AG04450 (cell line): ENCODE measurements at regions of chr11 and their contacts with region 1.

Region 1: DNA sequence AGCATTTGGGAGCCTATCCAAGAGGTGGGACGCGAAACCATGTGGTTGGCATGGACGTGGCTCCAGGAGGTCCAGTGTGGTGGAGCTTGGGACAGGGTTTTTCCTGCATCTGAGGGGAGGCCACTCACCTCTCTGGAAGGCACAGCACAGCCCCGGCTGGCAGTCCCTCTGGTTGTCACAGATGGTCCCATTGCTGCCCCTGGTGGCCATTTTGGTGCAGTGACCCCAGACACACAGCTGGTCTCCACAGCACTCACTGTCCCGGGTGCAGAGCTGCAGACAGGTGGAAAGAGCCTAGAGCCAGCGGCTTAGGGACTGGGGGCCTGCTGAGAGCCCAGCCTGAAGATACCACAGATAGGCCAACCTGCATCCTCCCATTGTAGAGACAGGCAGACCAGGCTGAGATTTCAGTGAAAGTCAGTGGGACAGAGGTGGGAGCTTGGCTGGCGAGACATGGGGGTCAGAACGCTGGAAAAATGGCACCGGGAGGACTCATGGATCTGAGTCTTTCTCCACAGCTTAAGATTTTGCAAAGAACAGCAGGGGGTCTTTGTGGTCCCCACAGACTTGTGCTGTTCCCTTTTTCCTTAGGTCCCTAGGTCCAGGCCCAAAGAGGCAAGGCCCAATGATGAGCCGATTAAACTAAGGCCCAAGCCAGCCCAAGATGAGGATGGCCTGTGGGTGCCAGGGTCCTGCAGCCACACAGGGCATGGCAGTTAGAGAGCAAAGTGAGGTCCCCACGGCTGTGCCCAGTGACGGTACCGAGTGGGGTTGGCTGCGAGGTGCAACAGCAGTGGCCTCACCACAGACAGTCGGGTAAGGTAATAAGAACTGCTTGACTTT is 41.4 kb downstream of the DKK3 start:
- DNase-seq: no peak
- H3K4me3 ChIP-seq: no peak overlapping the region
- H3K27ac ChIP-seq: no peak overlapping the region
- H3K27me3 ChIP-seq: no peaks in the 10 kb centered on the region
- CTCF ChIP-seq: peak; percentile 67

Region 2: DNA sequence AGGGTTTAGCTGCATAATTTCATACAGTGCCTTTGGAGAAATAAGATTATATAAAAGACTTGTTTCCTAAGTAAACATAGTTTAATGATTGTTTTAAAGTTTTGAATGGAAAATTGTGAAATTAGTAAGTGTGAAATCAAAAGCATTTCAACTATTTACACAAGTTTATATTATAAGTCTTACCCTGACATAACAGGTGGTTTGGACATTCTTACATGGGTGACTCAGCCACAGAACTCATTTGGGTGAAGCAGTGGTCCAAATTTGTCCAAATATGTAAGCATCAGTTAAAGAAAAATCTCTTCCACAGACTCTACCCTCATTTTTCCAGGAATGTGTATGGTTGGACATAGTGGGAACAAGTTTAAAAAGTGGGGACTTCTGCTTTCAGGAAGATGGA is 57.3 kb before region 1 on chr11:
- CTCF ChIA-PET with region 1: no interaction called
- POLR2A ChIA-PET with region 1: no interaction called
- DNase-seq: peak; percentile 65
- H3K4me3 ChIP-seq: no peak overlapping the region
- H3K27ac ChIP-seq: peak overlapping the region; percentile 78
- H3K27me3 ChIP-seq: no peaks in the 10 kb centered on the region
- CTCF ChIP-seq: no peak

Region 3: DNA sequence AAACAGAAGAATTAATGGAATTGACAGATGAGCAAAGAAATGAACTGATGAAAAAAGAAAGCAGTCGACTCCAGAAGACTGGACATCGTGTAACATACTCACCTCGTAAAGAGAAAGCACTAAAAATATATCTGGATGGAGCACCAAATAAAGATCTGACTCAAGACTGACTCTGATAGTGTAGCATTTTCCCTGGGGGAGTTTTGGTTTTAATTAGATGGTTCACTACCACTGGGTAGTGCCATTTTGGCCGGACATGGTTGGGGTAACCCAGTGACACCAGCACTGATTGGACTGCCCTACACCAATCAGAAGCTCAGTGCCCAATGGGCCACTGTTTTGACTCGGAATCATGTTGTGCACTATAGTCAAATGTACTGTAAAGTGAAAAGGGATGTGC is 11.0 kb before region 1 on chr11:
- CTCF ChIA-PET with region 1: interaction called, 13 read pairs
- POLR2A ChIA-PET with region 1: no interaction called
- DNase-seq: no peak
- H3K4me3 ChIP-seq: no peak overlapping the region
- H3K27ac ChIP-seq: no peak overlapping the region
- H3K27me3 ChIP-seq: no peaks in the 10 kb centered on the region
- CTCF ChIP-seq: no peak

Region 4: DNA sequence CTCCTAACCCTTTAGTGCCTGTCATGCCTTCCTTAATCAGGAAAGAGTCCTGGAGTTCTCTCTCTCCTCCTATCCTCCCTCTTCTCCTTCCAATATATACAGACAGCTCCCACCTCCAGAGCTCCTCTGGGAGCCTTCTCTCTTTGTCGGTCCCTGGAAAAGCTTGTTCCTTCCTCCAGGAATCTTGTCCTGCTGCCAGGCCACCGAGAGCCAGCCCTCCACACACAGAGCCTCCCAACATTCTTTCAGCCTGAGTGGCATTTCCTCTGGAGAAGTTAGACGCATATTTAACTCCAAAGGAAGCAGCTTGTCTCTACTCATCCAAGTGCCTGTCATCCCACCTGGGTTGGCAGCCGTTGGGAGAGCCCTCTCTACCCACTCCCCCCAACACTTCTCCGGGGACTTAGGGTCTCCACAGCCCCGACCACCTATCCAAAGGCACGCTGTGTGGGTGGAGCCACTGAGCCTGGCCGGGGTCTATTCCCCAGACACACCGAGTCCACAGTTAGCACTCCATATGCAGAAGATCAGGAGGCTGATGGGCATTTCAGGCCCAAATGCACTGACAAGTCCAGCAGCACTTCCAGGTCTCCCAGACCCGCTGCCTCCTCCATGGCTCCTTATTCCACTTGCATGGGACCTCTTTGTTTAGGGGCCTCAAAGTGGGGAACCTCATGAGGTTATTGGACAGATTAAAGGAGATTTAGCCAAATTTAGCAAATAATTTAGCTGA is 10.3 kb after region 1 on chr11:
- CTCF ChIA-PET with region 1: interaction called, 18 read pairs
- POLR2A ChIA-PET with region 1: interaction called, 3 read pairs
- DNase-seq: peak; percentile 83
- H3K4me3 ChIP-seq: peak overlapping the region; percentile 13; the same call in 1 of the 2 replicates
- H3K27ac ChIP-seq: peak overlapping the region; percentile 88
- H3K27me3 ChIP-seq: no peaks in the 10 kb centered on the region
- CTCF ChIP-seq: no peak

Region 5: DNA sequence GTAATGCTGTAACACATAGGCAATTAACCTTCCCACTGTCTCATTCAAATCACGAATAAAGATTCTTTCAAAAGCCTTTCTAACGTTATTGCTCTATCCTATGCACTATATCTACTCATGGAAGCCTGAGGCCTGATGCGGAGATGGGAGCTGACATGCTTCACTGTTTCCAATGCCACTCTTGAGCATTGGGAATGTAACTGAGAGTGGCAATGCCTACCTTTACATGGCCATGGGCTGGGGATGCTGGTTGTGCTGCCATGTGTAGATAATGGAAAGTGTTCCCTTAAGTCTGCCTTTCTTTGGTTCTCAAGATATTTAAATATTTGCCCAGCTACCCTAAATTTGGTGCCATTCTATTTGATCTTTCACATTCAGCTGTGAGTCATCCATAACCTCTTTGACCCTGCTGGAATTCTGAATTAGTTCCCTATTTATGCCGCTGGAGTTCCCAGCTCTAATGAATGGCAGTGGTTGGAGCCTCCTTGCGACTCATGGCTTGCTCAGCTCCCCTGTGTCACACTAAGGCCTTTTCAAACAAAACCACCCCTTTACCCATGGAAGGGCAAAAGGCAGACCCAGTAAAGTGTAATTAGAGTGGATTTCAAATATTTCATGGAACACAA is 62.8 kb after region 1 on chr11:
- CTCF ChIA-PET with region 1: no interaction called
- POLR2A ChIA-PET with region 1: no interaction called
- DNase-seq: no peak
- H3K4me3 ChIP-seq: no peak overlapping the region
- H3K27ac ChIP-seq: no peak overlapping the region
- H3K27me3 ChIP-seq: no peaks in the 10 kb centered on the region
- CTCF ChIP-seq: no peak

Region 6: DNA sequence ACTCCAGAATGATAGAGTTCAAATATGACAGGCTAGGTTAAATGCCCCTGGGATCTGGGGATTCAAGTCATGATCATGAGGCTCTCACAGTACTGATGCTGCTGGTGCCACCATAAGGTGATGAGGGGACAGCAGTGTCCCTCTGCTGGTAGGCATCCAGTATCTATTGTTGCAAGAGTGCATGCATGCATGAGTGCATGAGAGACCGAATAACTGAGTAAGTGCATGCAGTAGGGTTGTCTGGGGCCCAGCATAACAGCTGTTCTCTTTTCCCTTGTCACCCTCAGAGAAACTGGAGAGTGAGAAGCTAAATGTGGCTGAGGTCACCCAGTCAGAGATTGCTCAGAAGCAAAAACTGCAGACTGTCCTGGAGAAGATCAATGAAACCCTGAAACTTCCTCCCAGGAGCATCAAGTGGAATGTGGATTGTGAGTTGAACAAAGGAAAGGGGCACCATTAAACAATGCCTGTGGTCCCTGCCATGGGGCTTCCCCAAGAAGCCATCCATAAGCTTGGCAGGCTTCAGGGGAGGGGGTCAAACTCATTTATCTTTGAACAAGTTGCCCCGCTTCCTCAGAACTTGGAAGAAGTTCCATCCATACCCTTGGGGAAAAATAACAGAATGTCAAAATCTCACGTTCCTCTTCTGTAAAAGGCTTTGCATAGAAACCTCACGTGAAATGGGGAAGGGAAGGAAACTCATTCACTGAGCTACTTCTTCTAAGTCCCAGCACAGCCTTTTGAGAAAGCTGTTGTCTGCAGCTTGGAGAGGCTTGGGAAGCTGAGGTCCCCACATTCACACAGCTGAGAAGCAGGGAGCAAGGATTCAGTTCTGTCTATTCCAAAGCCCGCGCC is 529.4 kb after region 1 on chr11:
- CTCF ChIA-PET with region 1: no interaction called
- POLR2A ChIA-PET with region 1: no interaction called
- DNase-seq: no peak
- H3K4me3 ChIP-seq: no peak overlapping the region
- H3K27ac ChIP-seq: no peak overlapping the region
- H3K27me3 ChIP-seq: no peaks in the 10 kb centered on the region
- CTCF ChIP-seq: peak; percentile 31